ENCODE measurements at regions of chr2 and their contacts with region 1.

Region 1: GRCh38 chr2:19020550-19021476 is 337.6 kb downstream of the OSR1 start:
- DNase-seq: peak; percentile 84
- ATAC-seq: peak; percentile 80
- H3K4me3 ChIP-seq: peak overlapping the region; percentile 27 to 63 (median 42); a peak in 5 of 6 replicates
- H3K27ac ChIP-seq: peak overlapping the region; percentile 52
- H3K4me1 ChIP-seq: peaks cover 29% of the 10 kb centered on the region
- H3K27me3 ChIP-seq: no peaks in the 10 kb centered on the region
- CTCF ChIP-seq: no peak
- EP300 ChIP-seq: no peak; a peak in 1 of 4 replicates
- POLR2A ChIP-seq: no peak
- RAD21 ChIP-seq: no peak

Region 2: DNA sequence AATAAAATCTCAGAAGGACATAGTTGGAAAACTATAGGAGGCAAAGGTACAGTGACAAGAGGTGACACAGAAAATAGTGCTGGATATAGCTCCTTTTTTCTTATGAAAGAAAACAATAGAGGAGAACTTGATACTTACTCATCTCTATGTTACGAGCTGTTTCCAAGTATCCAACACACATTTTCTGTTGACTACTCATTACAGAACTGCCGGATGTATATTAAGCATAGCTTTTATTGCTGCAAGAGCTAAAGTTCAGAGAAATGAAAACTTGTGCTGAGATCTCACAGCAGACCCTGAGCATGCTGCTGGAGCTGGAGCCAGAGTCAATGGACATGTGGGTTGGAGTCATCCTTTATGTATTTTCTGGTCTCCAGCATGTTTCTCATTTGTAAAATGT is 221.4 kb before region 1 on chr2:
- CTCF ChIA-PET with region 1: no interaction called
- POLR2A ChIA-PET with region 1: interaction called, 12 read pairs
- in situ Hi-C with region 1: no loop called
- intact Hi-C with region 1: loop called (anchors 1 kb)
- DNase-seq: no peak
- ATAC-seq: no peak
- H3K4me3 ChIP-seq: no peak overlapping the region
- H3K27ac ChIP-seq: no peak overlapping the region
- H3K4me1 ChIP-seq: peaks cover 31% of the 10 kb centered on the region
- H3K27me3 ChIP-seq: peaks cover 0 to 26% of the 10 kb centered on the region in 2 experiments; a peak in 3 of 5 replicates
- CTCF ChIP-seq: no peak
- EP300 ChIP-seq: no peak
- POLR2A ChIP-seq: no peak
- RAD21 ChIP-seq: no peak

Region 3: DNA sequence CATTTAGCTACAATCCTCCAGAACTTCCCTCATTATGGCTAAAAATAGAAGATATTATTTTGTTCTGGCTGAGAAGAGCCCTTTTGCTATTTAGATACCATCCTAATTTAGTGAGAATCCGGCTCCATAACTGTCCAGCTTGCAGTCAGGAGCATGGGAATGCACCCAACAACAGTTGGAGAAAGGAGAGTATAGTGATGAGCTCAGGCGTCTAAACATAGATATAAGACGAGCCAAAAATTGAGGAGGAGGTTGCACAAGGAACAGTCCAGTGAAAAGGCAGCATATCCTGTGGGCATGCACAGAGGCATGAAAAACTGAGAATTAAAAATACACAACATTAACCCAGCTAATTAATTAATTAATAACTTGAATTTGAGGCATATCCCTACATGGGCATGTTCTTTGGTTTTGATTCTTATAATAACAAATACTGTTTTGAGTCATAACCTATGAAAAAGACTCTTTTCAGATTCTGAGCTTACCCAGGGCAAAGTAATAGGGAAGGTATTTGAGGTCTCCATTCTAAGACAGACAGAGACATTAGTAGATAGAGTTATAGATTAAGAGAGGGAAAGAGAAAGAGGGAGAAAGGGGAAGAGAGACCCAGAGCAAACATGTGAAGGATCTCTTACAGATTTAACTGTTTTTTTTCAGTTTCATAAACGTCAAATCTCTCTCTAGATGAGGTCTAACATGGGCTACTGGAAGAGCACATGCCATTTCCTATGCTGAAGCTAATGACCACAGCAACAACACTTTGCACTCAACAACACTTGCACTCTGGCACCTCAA is 26.4 kb after region 1 on chr2:
- CTCF ChIA-PET with region 1: no interaction called
- POLR2A ChIA-PET with region 1: interaction called, 24 read pairs
- in situ Hi-C with region 1: no loop called
- intact Hi-C with region 1: no loop called
- DNase-seq: no peak
- ATAC-seq: no peak
- H3K4me3 ChIP-seq: no peak overlapping the region
- H3K27ac ChIP-seq: no peak overlapping the region
- H3K4me1 ChIP-seq: peaks cover 26% of the 10 kb centered on the region
- H3K27me3 ChIP-seq: no peaks in the 10 kb centered on the region
- CTCF ChIP-seq: no peak
- EP300 ChIP-seq: no peak
- POLR2A ChIP-seq: no peak
- RAD21 ChIP-seq: no peak

Region 4: GRCh38 chr2:19140596-19141219 is 119.9 kb after region 1 on chr2:
- CTCF ChIA-PET with region 1: no interaction called
- POLR2A ChIA-PET with region 1: interaction called, 27 read pairs
- in situ Hi-C with region 1: no loop called
- intact Hi-C with region 1: loop called (anchors 5 kb)
- DNase-seq: peak; percentile 99
- ATAC-seq: peak; percentile 100
- H3K4me3 ChIP-seq: no peak overlapping the region
- H3K27ac ChIP-seq: no peak overlapping the region
- H3K4me1 ChIP-seq: peaks cover 19% of the 10 kb centered on the region
- H3K27me3 ChIP-seq: no peaks in the 10 kb centered on the region
- CTCF ChIP-seq: no peak
- EP300 ChIP-seq: peak; percentile 75 to 93
- POLR2A ChIP-seq: no peak
- RAD21 ChIP-seq: no peak